Activated CD8-positive, alpha-beta T cell treated with anti-CD3 and anti-CD28 coated beads for 36 hours (primary cell): ENCODE measurements at regions of chr1 and their contacts with region 1.

Region 1: GRCh38 chr1:15272009-15272788 is 25.2 kb downstream of the FHAD1 start:
- DNase-seq: peak; percentile 68
- ATAC-seq: peak; percentile 97
- H3K4me3 Mint-ChIP-seq: no peak overlapping the region
- H3K27ac Mint-ChIP-seq: no peak overlapping the region
- H3K4me1 Mint-ChIP-seq: peaks cover 4% of the 10 kb centered on the region
- H3K27me3 Mint-ChIP-seq: peaks cover 27% of the 10 kb centered on the region
- CTCF ChIP-seq: peak; percentile 72

Region 2: DNA sequence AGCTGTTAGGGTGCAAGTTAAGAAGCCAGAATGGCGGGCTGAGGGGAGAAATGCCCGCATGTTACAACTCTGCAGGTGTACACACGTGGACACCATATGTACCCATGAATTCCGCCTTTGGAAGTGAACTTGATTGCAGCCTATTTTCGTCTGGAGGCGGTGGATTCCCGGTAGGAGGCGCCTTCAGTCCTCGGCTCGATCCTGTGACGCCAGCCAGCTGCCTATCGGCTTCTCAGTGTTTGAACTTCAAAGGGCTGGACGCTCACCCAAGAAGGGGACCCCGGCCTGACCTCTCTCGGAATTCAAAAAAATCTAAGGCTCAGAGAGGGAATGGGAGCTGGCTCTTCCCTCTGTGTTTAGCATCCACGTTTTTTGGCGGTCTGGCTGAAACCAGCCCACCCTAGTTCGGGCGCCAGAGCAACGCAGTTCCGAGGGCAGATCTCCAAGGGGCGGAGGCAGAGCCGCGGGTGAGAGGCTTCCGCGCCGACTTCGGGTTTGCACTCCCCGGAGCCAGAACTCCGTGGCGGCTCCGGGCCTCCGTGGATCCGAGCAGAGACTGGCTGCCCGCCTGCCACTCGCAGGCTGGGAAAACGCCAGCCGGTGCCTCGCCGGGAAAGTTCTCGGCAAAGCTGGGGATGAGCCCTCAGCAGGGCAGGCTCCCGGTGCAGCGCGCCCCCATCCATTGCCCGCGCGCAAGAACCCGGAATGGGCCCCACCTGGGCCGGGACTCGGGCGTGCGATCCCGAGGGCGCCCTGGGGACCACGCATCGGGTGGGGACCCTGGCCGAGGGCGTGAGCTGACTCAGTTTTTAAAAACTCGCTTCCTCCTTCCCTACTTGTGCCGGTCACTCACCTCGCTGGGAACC is 119.6 kb before region 1 on chr1:
- CTCF ChIA-PET with region 1: interaction called, 11 read pairs
- POLR2A ChIA-PET with region 1: no interaction called
- intact Hi-C with region 1: loop called (anchors 10 kb)
- DNase-seq: peak; percentile 43
- ATAC-seq: no peak
- H3K4me3 Mint-ChIP-seq: peak overlapping the region; percentile 24
- H3K27ac Mint-ChIP-seq: no peak overlapping the region
- H3K4me1 Mint-ChIP-seq: peaks cover 23% of the 10 kb centered on the region
- H3K27me3 Mint-ChIP-seq: peaks cover 53% of the 10 kb centered on the region
- CTCF ChIP-seq: no peak

Region 3: GRCh38 chr1:15224259-15224869 is 47.8 kb before region 1 on chr1:
- CTCF ChIA-PET with region 1: interaction called, 12 read pairs
- POLR2A ChIA-PET with region 1: no interaction called
- intact Hi-C with region 1: no loop called
- DNase-seq: no peak
- ATAC-seq: no peak
- H3K4me3 Mint-ChIP-seq: no peak overlapping the region
- H3K27ac Mint-ChIP-seq: no peak overlapping the region
- H3K4me1 Mint-ChIP-seq: no peaks in the 10 kb centered on the region
- H3K27me3 Mint-ChIP-seq: peaks cover 12% of the 10 kb centered on the region
- CTCF ChIP-seq: no peak

Region 4: DNA sequence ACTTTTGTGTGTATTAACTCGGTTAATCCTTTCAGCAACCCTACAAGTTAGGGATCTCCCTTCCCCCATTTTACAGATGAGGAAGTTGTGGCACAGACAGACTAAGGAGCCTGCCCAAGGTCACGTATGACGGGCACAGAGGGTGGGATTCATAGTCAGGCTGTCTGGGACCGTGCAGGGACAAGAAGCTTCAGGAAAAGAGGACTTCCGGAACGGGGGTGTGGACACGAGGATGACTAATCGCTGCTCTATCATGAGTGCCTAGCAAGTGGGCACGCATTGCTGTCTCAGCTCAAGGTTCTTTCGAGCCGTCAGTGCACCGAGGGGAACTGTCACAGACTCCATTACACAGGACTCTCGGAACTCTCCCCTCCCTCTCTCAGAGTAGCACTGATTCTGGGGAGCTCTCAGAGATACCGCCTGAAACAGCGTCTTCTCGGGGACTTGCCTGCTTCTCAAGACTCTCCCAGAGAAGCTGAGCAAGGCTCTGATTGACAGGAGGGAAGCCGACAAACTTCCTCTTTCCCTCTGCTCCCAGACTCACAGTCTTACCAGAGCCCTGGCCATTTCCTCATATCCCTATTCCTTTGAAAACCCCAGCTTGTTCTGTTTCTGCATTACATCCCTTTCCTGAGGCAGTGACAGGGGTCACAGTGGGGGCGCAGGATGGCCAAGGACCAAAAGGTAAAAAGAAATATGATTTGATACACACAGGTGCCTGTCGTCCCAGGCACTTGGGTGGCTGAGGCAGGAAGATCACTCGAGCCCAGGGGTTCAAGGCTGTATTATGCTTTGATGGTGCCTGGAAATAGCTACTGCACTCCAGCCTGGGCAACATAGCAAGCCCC is 10.8 kb before region 1 on chr1:
- CTCF ChIA-PET with region 1: interaction called, 12 read pairs
- POLR2A ChIA-PET with region 1: no interaction called
- intact Hi-C with region 1: no loop called
- DNase-seq: peak; percentile 73
- ATAC-seq: peak; percentile 93
- H3K4me3 Mint-ChIP-seq: peak overlapping the region; percentile 29
- H3K27ac Mint-ChIP-seq: no peak overlapping the region
- H3K4me1 Mint-ChIP-seq: peaks cover 25% of the 10 kb centered on the region
- H3K27me3 Mint-ChIP-seq: peaks cover 44% of the 10 kb centered on the region
- CTCF ChIP-seq: no peak

Region 5: DNA sequence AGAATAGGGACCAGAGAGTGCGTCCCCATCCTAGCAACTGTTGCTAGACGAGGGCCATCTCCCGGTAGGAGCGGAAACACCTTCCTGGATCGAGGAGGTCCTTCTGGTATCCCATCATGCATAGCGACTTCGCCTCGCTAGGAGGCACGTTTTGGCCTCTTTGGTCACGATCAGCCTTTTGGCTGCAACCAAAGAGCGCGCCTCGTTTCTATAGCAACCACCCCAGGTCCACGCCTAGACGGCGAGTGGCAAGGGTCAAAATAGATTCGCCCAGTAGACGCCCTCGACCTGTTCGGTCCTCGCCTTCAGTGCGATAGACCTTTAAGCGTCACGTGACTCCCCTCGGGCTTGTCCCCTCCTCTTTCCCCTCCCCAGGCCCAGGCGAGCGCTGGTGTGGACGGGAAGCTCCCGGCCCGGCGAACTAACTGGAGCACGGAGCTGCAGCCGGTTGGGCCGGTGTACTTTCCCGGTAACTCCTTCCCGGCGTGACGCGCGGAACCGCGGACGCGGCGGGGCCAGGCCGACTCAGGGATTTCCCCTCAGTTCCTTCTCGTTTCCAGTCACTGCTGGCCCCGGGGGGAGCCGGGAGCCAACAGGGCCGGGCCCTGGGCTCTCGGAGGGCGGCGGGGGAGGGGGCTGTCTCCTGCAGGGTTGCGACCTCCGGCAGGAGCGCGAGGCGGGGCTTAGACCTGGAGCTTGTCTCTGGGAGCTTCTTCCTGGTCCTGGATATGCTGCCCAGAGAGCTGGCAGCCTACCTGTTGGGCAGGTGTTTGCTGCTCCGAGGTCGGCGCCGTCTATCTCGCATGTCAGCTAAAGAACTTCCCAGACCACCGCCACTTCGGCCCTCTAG is 254.5 kb after region 1 on chr1 and contains the start of gene DNAJC16:
- CTCF ChIA-PET with region 1: no interaction called
- POLR2A ChIA-PET with region 1: no interaction called
- intact Hi-C with region 1: no loop called
- DNase-seq: peak; percentile 98
- ATAC-seq: peak; percentile 43
- H3K4me3 Mint-ChIP-seq: peak within 1 kb of the TSS; percentile 79
- H3K27ac Mint-ChIP-seq: peak within 1 kb of the TSS; percentile 98
- H3K4me1 Mint-ChIP-seq: peaks cover 46% of the 10 kb centered on the region
- H3K27me3 Mint-ChIP-seq: no peaks in the 10 kb centered on the region
- CTCF ChIP-seq: no peak
- total RNA-seq, gene DNAJC16: 10.0 to 13.0 TPM